Mammary epithelial cell (primary cell): ENCODE measurements at regions of chr12 and their contacts with region 1.

Region 1: DNA sequence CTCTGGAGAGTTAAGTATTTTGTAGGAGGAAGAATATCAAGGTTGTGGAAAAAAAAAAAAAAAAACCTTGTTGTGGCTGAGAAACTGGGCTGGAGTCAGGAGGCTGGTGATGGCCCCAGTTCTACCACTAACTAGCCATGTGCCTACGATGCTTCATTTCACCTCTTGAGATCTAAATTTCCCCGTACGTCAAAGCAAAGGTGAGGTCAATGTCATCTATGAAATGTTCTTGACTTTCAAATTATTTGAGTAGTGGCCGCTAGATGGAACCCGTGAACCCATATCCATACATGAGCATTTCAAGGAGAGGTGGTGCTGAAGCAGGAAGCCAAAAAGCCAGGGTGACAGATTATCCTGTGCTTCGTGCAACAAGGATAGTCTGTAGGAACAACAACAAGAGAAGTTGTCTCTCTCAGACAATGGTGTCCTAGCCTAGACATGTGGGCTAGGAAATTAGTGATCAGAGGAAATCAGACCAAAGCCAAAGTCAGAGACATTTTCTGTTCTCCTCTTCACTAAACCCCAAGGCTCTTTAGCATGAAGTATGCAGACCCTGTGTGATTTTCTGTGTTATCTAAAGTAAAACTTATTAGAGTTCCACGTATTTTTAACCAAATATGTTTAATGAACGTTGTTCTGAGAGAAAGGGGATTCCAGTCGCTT is 95.5 kb upstream of the ETV6 start:
- DNase-seq: peak; percentile 49
- H3K4me3 ChIP-seq: no peak overlapping the region
- H3K27ac ChIP-seq: no peak overlapping the region
- H3K4me1 ChIP-seq: no peaks in the 10 kb centered on the region
- H3K27me3 ChIP-seq: no peaks in the 10 kb centered on the region
- CTCF ChIP-seq: peak; percentile 52 to 71

Region 2: DNA sequence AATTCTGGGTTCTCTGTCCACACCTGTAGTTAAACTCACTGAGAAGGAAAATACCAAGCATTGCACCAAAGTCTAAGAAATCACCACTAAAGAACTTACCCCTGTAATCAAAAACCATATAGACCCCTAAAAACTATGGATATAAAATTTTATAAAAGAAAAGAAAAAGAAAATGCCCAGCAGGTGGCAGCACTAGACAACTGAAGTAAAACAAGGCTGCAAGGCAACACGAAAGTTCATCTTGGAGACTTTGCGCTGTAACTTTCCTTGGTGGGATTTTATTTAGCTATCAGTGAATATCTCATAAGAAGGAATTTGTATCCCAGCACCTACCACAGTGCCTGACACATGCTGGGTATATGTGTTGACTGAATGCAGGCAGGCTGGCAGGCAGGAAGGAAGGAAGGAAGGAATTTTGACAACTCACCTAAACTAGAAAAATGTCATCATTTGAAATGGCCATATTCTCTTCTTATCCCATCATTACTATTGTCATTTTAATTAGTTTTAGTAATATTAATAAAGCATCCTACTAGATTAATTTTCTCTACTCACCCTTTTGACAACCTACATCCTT is 27.3 kb after region 1 on chr12:
- CTCF ChIA-PET with region 1: no interaction called
- dilution Hi-C with region 1: no loop called
- in situ Hi-C with region 1: no loop called
- intact Hi-C with region 1: loop called (anchors 1 kb)
- DNase-seq: peak; percentile 52
- H3K4me3 ChIP-seq: no peak overlapping the region
- H3K27ac ChIP-seq: no peak overlapping the region
- H3K4me1 ChIP-seq: peaks cover 24% of the 10 kb centered on the region
- H3K27me3 ChIP-seq: no peaks in the 10 kb centered on the region
- CTCF ChIP-seq: peak; percentile 27 to 48

Region 3: DNA sequence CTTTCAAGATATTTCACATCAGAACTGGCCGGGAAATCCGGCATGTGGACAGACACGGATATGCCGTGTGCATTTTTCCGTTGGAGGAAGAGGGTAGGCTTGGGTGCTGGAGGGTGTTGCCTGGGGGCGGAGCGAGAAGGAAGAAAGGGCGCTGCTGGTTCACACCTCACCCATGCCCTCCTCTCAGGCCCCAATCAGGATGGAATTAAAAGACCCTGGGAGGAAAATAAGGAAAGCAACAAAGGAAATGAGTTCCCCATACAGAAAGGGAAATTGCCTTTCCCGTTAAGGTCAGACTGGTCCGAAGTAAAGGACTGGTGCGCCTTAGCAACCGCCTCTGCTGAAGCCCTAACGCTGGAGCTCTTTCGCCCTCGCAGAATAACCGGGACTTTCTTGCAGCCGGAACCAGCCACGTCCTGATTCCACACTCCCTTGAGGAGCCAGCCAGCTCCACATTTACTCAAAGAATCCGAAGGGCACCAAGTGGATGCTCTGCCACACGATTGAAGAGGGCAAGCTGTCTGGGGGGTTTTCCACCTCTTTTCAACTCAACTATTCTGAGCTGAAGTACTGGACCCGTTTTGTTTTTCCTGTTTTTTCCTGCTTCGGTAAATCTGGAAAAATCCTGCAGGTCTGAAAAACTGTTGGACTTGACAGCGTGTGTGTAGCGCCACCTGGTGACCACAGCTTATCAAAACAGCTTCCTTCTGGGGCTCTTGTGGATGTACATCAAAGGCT is 479.0 kb after region 1 on chr12:
- CTCF ChIA-PET with region 1: interaction called, 3 read pairs
- dilution Hi-C with region 1: no loop called
- in situ Hi-C with region 1: loop called (anchors 10 kb)
- intact Hi-C with region 1: loop called (anchors 1 kb)
- DNase-seq: peak; percentile 72
- H3K4me3 ChIP-seq: peak overlapping the region; percentile 11 to 33 (median 26)
- H3K27ac ChIP-seq: no peak overlapping the region
- H3K4me1 ChIP-seq: no peaks in the 10 kb centered on the region
- H3K27me3 ChIP-seq: no peaks in the 10 kb centered on the region
- CTCF ChIP-seq: peak; percentile 79 to 90

Region 4: GRCh38 chr12:12696562-12697383 is 1142.8 kb after region 1 on chr12:
- CTCF ChIA-PET with region 1: no interaction called
- dilution Hi-C with region 1: no loop called
- in situ Hi-C with region 1: loop called (anchors 25 kb)
- intact Hi-C with region 1: loop called (anchors 5 kb)
- DNase-seq: peak; percentile 78
- H3K4me3 ChIP-seq: peak overlapping the region; percentile 55 to 90 (median 59)
- H3K27ac ChIP-seq: peak overlapping the region; percentile 96
- H3K4me1 ChIP-seq: peaks cover 8% of the 10 kb centered on the region
- H3K27me3 ChIP-seq: no peaks in the 10 kb centered on the region
- CTCF ChIP-seq: no peak